Activated naive CD4-positive, alpha-beta T cell treated with anti-CD3 and anti-CD28 coated beads for 36 hours (primary cell): ENCODE measurements at regions of chr13 and their contacts with region 1.

Region 1: DNA sequence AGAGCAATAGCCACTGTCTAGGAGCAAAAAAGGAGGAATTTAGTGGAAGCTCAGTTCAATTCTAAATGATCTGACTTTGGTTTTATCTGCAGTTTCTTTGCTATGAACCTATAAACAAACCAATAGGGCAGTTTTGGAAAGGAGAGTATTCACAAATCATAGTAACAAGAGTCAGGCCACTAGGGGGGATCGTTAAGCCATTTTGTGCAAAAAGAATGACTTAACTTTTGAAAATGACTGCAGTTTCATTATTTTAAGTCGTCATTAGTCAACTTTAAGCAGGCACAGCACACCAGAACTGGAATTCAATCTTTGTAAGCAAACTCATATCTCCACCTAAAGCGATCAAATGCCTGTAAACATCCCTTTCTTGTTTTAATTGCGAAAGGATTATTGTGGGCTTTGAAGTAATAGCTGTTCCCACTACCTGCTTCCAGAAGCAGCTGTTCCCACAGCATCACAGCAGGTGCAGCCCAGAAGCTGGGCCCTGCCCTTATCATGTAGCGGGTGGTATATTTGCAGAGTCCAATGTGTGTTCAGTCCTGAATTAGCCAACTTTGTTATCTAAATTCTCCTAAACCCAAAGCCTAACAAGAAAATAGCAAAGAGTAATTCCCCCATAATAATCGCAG is 51.5 kb downstream of the SOX21 start:
- DNase-seq: peak; percentile 58
- H3K4me3 Mint-ChIP-seq: no peak overlapping the region
- H3K27ac Mint-ChIP-seq: no peak overlapping the region
- H3K4me1 Mint-ChIP-seq: peaks cover 37% of the 10 kb centered on the region
- H3K27me3 Mint-ChIP-seq: peaks cover 16% of the 10 kb centered on the region

Region 2: DNA sequence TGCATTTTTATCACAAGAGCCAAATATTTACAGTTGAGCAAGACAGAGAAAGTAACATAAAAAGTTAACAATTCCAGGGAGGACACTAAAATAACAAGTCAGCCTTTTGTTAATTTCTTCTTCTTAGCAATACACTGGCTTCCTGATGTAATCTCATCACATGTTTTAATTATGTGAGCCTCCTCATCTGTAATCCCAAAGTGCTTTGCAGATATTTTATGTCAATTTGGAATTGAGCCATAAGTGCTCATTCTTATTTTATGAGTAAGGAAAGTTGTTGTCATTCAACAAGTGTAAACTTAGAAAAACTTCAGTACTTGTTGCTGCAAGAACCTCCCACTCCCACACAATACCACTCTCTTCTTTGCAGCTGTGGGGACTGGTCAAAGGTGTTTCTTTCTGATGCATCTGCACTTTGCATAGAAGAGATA is 1210.6 kb before region 1 on chr13:
- CTCF ChIA-PET with region 1: no interaction called
- intact Hi-C with region 1: no loop called
- DNase-seq: no peak
- H3K4me3 Mint-ChIP-seq: no peak overlapping the region
- H3K27ac Mint-ChIP-seq: no peak overlapping the region
- H3K4me1 Mint-ChIP-seq: no peaks in the 10 kb centered on the region
- H3K27me3 Mint-ChIP-seq: no peaks in the 10 kb centered on the region

Region 3: GRCh38 chr13:94549232-94550061 is 111.4 kb before region 1 on chr13:
- CTCF ChIA-PET with region 1: interaction called, 3 read pairs
- intact Hi-C with region 1: loop called (anchors 2 kb)
- DNase-seq: peak; percentile 93
- H3K4me3 Mint-ChIP-seq: peak overlapping the region; percentile 75
- H3K27ac Mint-ChIP-seq: peak overlapping the region; percentile 88
- H3K4me1 Mint-ChIP-seq: peaks cover 5% of the 10 kb centered on the region
- H3K27me3 Mint-ChIP-seq: peaks cover 3% of the 10 kb centered on the region

Region 4: DNA sequence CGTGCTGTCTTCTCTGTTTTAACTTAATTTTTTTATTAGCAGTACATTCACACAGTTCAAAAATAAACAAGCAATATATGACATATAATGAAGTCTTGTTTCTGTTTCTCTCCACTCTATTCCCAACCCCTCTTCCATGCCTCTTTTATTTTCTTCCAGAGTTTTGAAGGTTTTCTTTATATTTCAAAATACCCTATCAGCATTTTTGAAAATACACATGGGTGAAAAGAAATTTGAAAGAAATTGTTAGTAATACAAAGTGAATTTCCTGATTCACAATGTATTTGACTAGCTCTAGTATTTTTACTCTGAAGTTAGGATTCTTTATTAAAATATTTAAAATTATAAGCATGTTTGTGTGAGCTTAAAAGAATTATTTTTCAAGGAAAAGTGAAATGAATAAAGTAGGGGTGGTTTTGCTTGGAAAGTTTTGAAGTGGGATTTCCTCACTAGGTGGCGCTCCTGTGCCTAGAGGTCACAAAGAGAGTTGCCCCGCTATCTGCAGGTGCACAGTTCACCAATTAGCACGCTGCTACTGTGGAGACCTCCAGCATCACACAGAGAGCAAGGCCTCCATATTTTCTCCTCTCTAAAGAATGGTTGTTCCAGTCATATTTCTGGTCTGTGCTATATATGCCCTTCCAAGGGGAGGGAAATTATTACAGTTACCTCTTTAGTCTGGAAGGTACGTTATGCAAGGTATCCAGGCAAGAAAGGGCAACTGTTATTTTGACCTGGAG is 14.0 kb after region 1 on chr13:
- CTCF ChIA-PET with region 1: interaction called, 17 read pairs
- intact Hi-C with region 1: no loop called
- DNase-seq: peak; percentile 80
- H3K4me3 Mint-ChIP-seq: no peak overlapping the region
- H3K27ac Mint-ChIP-seq: no peak overlapping the region
- H3K4me1 Mint-ChIP-seq: no peaks in the 10 kb centered on the region
- H3K27me3 Mint-ChIP-seq: peaks cover 23% of the 10 kb centered on the region

Region 5: GRCh38 chr13:94967183-94968039 is 306.6 kb after region 1 on chr13:
- CTCF ChIA-PET with region 1: no interaction called
- intact Hi-C with region 1: loop called (anchors 5 kb)
- DNase-seq: peak; percentile 37
- H3K4me3 Mint-ChIP-seq: no peak overlapping the region
- H3K27ac Mint-ChIP-seq: no peak overlapping the region
- H3K4me1 Mint-ChIP-seq: peaks cover 10% of the 10 kb centered on the region
- H3K27me3 Mint-ChIP-seq: peaks cover 62% of the 10 kb centered on the region

Region 6: GRCh38 chr13:95480131-95480545 is 819.3 kb after region 1 on chr13:
- CTCF ChIA-PET with region 1: interaction called, 3 read pairs
- intact Hi-C with region 1: loop called (anchors 5 kb)
- DNase-seq: peak; percentile 27
- H3K4me3 Mint-ChIP-seq: no peak overlapping the region
- H3K27ac Mint-ChIP-seq: no peak overlapping the region
- H3K4me1 Mint-ChIP-seq: peaks cover 10% of the 10 kb centered on the region
- H3K27me3 Mint-ChIP-seq: peaks cover 3% of the 10 kb centered on the region